ENCODE measurements at regions of chr2 and their contacts with region 1.

Region 1: DNA sequence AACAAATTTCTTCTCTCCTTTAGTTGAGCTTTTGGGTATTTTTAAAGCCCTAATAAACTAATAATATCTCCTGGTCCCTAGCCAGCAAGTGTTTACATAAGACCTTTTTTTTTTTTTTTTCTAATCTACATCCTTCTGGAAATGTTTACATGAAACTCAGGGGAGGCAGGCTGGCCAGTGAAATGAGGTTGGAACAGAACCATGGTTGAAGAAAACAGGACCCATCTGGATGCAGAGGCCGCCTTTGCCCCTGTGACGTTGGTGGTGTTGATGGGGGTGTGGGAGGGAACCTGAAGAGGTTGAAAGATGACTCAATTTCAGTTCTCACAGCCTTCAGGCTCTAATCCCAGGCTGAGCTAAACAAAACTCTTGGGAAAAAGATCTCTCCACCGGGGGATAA is 118.5 kb downstream of the NRP2 start:
- DNase-seq: peak; percentile 8
- H3K4me3 ChIP-seq: no peak overlapping the region
- CTCF ChIP-seq: no peak

Region 2: DNA sequence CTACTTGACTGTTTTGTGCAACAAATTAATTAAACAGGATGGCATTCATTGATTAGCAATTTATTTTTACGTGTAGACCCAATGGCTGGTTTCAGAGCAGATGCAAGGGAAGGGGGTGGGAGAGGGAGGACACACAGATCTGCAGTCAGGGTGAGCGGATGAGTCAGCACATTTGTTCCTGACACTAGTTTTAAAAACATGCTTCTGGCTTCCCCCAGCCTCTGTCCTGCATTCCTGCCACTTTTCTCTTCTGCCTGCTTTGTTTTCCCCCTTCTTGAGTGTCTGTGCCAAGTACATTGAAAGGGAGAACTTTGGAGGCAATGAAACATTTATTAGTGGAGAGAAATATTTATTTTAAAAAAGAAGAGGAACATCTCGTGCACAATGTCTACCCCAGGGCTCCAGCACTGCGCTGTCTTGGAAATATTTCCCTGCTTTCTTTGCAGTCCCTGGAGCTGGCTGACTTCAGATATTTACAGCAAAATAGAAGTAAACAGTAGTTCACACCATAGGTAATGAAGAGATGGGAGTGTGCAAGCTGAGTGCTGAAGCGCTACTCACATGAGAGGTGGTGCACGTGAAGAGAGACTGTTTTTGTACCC is 66.2 kb before region 1 on chr2:
- in situ Hi-C with region 1: loop called (anchors 5 kb)
- DNase-seq: peak; percentile 70
- H3K4me3 ChIP-seq: no peak overlapping the region
- CTCF ChIP-seq: no peak

Region 3: GRCh38 chr2:205845446-205845845 is 44.7 kb after region 1 on chr2:
- in situ Hi-C with region 1: no loop called
- DNase-seq: no peak
- H3K4me3 ChIP-seq: no peak overlapping the region
- CTCF ChIP-seq: no peak

Region 4: GRCh38 chr2:205892251-205892655 is 91.5 kb after region 1 on chr2:
- in situ Hi-C with region 1: loop called (anchors 5 kb)
- DNase-seq: peak; percentile 88
- H3K4me3 ChIP-seq: no peak overlapping the region
- CTCF ChIP-seq: no peak

Measured in astrocyte of the cerebellum (primary cell).